ENCODE measurements at regions of chr10 and their contacts with region 1.

Region 1: DNA sequence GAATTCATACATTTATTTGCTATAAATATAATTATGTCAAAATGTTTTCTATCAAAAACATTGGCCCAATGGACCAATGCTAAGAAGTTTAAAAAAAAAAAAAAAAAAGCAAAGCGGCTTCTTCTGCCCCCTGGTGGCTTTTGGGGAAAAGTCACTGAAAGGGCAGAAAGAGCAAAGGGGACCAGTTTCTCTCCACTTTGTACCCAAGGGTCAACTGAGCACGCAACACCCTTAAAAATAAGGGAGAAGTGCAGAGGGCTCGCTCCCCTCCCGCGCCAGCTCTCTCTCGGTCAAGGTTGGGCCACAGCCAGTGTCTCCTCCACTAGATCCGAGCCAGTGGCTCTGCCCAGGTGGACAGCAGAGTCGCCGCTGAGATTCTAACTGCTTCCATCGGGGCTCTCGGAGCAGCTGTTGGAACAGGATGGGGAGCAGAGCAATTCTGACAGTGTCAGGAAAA is 136.4 kb upstream of the FGFR2 start:
- DNase-seq: peak; percentile 66
- H3K4me3 Mint-ChIP-seq: no peak overlapping the region
- H3K27ac Mint-ChIP-seq: no peak overlapping the region
- H3K4me1 Mint-ChIP-seq: peaks cover 5% of the 10 kb centered on the region
- H3K27me3 Mint-ChIP-seq: peaks cover 38% of the 10 kb centered on the region

Region 2: DNA sequence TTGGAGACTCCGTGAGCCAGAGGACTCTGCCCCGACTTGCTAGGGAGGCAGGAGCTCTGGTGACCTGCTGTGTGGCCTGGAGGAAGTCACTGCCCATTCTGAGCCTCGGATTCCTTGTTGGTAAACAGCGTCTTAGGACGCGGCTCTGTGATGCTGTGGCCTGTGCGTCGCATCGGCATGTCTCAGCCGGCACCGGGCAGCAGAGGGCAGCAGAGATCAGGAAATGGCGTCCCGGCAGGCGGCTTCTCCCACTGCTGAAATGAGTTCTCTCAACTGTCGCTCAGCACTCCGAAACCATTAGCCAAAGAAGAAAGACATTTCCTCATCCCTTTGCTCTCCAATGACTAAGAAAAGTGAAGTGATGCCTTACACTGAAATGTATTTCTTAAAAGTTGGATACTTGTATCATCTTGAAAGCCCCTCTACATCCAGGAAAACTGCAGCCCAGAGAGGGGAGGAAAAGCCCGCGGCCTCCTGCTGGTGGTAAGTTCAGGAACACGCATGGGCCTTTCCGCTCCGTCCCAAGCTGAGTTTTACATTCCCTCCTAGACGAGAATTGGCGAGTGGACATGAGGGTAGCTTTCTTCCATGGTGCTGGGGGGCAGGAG is 791.7 kb before region 1 on chr10:
- intact Hi-C with region 1: loop called (anchors 1 kb)
- DNase-seq: peak; percentile 93
- H3K4me3 Mint-ChIP-seq: peak overlapping the region; percentile 21
- H3K27ac Mint-ChIP-seq: no peak overlapping the region
- H3K4me1 Mint-ChIP-seq: peaks cover 6% of the 10 kb centered on the region
- H3K27me3 Mint-ChIP-seq: peaks cover 2% of the 10 kb centered on the region

Region 3: GRCh38 chr10:121722665-121723064 is 12.0 kb before region 1 on chr10:
- intact Hi-C with region 1: no loop called
- DNase-seq: no peak
- H3K4me3 Mint-ChIP-seq: no peak overlapping the region
- H3K27ac Mint-ChIP-seq: no peak overlapping the region
- H3K4me1 Mint-ChIP-seq: no peaks in the 10 kb centered on the region
- H3K27me3 Mint-ChIP-seq: peaks cover 5% of the 10 kb centered on the region

Region 4: DNA sequence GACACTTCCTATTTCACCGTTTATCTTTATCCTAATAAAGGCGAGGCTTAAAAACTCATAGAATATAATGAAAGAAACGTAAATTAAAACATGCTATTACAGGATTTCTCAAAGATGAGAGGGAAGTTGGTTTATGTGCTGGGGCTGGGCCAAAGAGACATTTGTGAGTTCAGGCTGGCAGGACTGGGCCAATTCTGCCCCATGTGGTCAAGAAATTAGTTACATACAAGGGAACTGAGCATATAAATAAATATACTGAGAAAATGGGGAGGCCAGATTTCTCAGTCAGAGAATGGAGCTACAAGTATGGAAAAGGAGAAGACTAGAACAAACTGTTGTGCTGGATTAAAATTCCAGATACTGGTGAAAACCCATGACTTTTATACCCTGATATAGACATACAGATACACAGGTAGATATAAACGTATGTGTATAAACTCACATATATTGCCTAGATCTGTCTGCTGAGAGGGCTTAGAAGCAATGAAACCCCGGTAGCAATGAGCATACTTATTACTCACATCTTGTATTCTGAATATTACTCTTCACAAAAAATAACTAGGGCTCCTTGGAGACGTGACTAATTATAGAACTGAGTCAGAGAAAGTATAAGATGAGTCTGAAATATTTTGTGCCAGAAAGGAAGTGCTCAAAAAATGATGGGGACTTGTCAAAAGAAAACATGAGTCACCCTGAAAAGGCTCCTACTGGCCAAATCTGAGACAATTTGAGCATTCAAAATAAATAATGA is 19.3 kb after region 1 on chr10:
- intact Hi-C with region 1: loop called (anchors 1 kb)
- DNase-seq: no peak
- H3K4me3 Mint-ChIP-seq: no peak overlapping the region
- H3K27ac Mint-ChIP-seq: no peak overlapping the region
- H3K4me1 Mint-ChIP-seq: peaks cover 11% of the 10 kb centered on the region
- H3K27me3 Mint-ChIP-seq: peaks cover 3% of the 10 kb centered on the region

Region 5: DNA sequence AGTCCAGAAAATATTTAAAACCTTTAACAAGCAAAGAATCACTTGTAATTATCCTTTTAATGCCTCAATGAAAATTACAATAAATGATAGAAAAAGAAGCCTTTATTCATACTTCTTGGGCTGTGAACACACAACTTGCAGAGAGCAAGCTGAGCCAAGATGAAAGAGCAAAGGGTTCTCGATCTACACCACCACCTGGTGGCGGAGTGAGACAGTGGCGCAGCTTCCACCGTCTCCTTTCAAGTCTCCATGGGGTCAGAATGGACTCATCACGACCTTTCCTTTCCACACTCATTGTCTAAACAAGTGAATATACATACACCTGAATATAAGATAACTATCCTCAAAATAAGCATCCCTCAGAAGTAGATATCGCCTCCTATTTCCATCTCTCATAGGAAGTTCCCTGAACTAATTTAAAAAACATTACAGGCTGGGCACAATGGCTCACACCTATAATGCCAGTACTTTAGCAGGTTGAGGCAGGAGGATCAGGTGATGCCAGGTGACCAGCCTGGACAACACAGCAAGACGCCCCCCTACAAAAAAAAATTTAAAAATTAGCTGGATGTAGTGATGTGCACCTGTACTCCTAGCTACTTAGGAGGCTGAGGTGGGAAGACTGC is 152.5 kb after region 1 on chr10:
- intact Hi-C with region 1: loop called (anchors 5 kb)
- DNase-seq: peak; percentile 83
- H3K4me3 Mint-ChIP-seq: no peak overlapping the region
- H3K27ac Mint-ChIP-seq: no peak overlapping the region
- H3K4me1 Mint-ChIP-seq: peaks cover 2% of the 10 kb centered on the region
- H3K27me3 Mint-ChIP-seq: no peaks in the 10 kb centered on the region

Region 6: DNA sequence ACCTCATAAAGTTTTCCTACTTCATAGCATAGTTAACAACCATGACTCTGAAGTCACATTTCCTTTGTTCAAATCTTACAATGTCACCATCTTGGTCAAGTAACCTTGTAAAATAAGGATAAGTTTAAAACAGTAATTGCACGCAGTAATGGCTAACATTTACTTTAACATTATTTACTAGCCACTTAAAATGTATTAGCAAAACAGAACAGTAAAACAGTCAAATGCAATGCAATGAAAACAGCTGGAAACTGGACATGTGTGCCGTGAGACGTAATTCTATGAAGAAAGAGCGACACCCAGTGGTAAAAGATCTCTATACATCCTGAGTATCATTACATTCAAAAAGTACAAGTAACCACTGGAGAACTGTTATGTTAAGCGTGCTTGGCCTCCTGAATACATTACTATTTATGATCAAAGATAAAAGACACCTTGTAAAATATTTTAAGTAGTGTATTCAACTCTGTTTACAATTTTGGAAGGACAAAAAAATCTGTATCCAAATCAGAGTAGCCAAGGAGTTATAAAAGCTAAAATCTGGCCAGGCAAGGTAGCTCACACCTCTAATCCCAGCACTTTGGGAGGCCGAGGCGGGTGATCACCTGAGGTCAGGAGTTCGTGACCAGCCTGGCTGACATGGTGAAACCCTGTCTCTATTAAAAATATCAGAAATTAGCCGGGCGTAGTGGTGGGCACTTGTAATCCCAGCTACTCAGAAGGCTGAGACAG is 166.0 kb after region 1 on chr10:
- intact Hi-C with region 1: loop called (anchors 5 kb)
- DNase-seq: peak; percentile 70
- H3K4me3 Mint-ChIP-seq: no peak overlapping the region
- H3K27ac Mint-ChIP-seq: no peak overlapping the region
- H3K4me1 Mint-ChIP-seq: no peaks in the 10 kb centered on the region
- H3K27me3 Mint-ChIP-seq: no peaks in the 10 kb centered on the region

Measured in activated CD4-positive, alpha-beta T cell treated with anti-CD3 and anti-CD28 coated beads, Interleukin-2, amount 10 ng/mL, durations not matched to agents 24 days and 14 days (primary cell).